ENCODE measurements at regions of chr12 and their contacts with region 1.

Region 1: GRCh38 chr12:949453-950191 is at the start of gene RAD52:
- DNase-seq: peak; percentile 97
- ATAC-seq: peak; percentile 85
- H3K4me3 Mint-ChIP-seq: peak within 1 kb of the TSS; percentile 99
- H3K27ac Mint-ChIP-seq: peak within 1 kb of the TSS; percentile 96
- H3K4me1 Mint-ChIP-seq: peaks cover 26% of the 10 kb centered on the region
- H3K27me3 Mint-ChIP-seq: no peaks in the 10 kb centered on the region
- CTCF ChIP-seq: peak; percentile 65
- total RNA-seq, gene RAD52: 15.0 and 15.2 TPM in 2 replicates

Region 2: GRCh38 chr12:389139-390096 is 560.2 kb before region 1 on chr12 and contains the start of gene KDM5A:
- CTCF ChIA-PET with region 1: no interaction called
- POLR2A ChIA-PET with region 1: no interaction called
- intact Hi-C with region 1: loop called (anchors 2 kb)
- DNase-seq: peak; percentile 83
- ATAC-seq: peak; percentile 92
- H3K4me3 Mint-ChIP-seq: peak within 1 kb of the TSS; percentile 95
- H3K27ac Mint-ChIP-seq: peak within 1 kb of the TSS; percentile 97
- H3K4me1 Mint-ChIP-seq: peaks cover 46% of the 10 kb centered on the region
- H3K27me3 Mint-ChIP-seq: no peaks in the 10 kb centered on the region
- CTCF ChIP-seq: no peak
- total RNA-seq, gene KDM5A: 113 and 135 TPM in 2 replicates

Region 3: DNA sequence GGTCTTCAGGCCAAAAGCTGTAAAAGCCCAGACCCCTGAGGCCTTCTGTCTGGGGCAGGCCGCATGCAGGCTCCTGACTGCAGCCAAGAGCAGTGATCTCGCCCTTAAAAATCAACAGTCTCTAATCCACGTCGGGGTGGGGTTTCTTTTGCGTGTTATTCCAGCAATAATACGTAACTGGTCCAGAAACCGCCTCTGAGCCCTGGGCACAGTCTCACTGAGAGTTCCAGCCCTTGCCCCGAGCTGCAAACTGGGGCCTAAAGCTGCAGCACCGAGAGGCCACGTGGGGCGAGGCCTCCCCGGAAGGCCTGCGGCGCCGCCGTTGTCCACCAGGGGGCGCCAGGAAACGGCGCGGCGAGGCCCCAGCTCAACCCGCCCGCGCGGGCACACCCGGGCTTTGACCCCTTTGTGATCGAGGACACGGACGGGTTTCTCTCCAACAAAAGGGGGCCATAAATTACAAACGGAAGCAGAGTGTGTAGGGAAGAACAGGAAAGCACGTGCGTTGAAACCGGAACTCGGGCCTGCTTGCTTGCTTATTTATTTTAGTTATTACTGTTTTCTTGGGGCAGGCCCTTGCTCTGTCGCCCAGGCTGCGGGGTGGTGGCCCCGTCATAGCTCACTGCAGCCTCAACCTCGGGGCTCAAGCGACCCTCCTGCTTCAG is 373.5 kb before region 1 on chr12:
- CTCF ChIA-PET with region 1: interaction called, 11 read pairs
- POLR2A ChIA-PET with region 1: interaction called, 7 read pairs
- intact Hi-C with region 1: loop called (anchors 1 kb)
- DNase-seq: peak; percentile 91
- ATAC-seq: peak; percentile 99
- H3K4me3 Mint-ChIP-seq: peak overlapping the region; percentile 75
- H3K27ac Mint-ChIP-seq: no peak overlapping the region
- H3K4me1 Mint-ChIP-seq: peaks cover 11% of the 10 kb centered on the region
- H3K27me3 Mint-ChIP-seq: no peaks in the 10 kb centered on the region
- CTCF ChIP-seq: peak; percentile 70

Region 4: GRCh38 chr12:835754-836518 is 113.7 kb before region 1 on chr12:
- CTCF ChIA-PET with region 1: no interaction called
- POLR2A ChIA-PET with region 1: interaction called, 10 read pairs
- intact Hi-C with region 1: no loop called
- DNase-seq: no peak
- ATAC-seq: no peak
- H3K4me3 Mint-ChIP-seq: no peak overlapping the region
- H3K27ac Mint-ChIP-seq: no peak overlapping the region
- H3K4me1 Mint-ChIP-seq: peaks cover 1% of the 10 kb centered on the region
- H3K27me3 Mint-ChIP-seq: no peaks in the 10 kb centered on the region
- CTCF ChIP-seq: no peak

Region 5: GRCh38 chr12:1583421-1584078 is 633.9 kb after region 1 on chr12:
- CTCF ChIA-PET with region 1: no interaction called
- POLR2A ChIA-PET with region 1: no interaction called
- intact Hi-C with region 1: loop called (anchors 1 kb)
- DNase-seq: peak; percentile 36
- ATAC-seq: peak; percentile 96
- H3K4me3 Mint-ChIP-seq: peak overlapping the region; percentile 69
- H3K27ac Mint-ChIP-seq: no peak overlapping the region
- H3K4me1 Mint-ChIP-seq: peaks cover 17% of the 10 kb centered on the region
- H3K27me3 Mint-ChIP-seq: no peaks in the 10 kb centered on the region
- CTCF ChIP-seq: peak; percentile 96

Region 6: DNA sequence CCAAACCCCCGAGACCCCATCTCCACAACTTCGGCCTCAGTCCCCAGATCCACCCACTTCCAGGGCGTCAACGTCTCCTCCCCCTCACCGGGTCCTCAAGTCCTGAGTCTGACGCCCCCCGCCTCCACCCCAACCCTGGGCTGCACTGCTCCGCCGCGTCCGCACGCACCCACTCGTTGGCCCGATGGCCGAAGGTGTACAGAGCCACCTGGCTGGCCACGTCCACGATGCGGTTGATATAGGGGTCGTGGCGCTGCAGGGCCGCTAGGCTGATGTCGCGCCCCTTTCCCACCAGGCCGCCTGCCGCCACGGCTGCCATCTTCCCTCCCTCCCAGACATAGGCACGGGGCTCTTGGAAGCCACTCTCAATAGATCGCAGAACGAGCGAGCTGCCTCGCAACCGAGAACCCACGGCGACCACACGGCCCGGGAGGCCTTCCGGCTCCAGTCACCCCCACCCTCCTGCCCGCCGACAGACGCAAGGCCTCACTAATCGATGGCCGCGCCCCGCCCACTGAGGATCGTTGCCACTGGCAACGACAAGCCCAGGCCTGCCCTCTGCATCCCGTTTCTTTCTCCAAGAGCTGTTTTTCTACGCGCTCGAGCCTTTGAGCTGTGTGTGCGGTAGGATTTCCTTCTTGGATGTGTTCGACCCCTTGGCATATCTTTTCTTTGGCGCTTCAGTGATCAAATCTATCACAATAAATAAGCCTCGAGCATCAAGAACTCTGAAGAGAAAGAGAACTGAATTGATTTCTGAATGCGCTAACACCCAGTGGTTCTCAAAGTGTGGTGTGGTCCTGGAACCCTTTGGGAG is 1054.7 kb after region 1 on chr12 and contains the start of gene DCP1B:
- CTCF ChIA-PET with region 1: no interaction called
- POLR2A ChIA-PET with region 1: no interaction called
- intact Hi-C with region 1: loop called (anchors 1 kb)
- DNase-seq: peak; percentile 83
- ATAC-seq: peak; percentile 99
- H3K4me3 Mint-ChIP-seq: peak within 1 kb of the TSS; percentile 99
- H3K27ac Mint-ChIP-seq: peak within 1 kb of the TSS; percentile 98
- H3K4me1 Mint-ChIP-seq: peaks cover 26% of the 10 kb centered on the region
- H3K27me3 Mint-ChIP-seq: no peaks in the 10 kb centered on the region
- CTCF ChIP-seq: no peak
- total RNA-seq, gene DCP1B: 12.4 and 14.7 TPM in 2 replicates

Measured in activated B cell treated with CpG ODN at 0.5 μM for 24 hours (primary cell).